B cell (primary cell): ENCODE measurements at regions of chr15 and their contacts with region 1.

Region 1: GRCh38 chr15:69997697-69998273 is 99.9 kb downstream of the TLE3 start:
- DNase-seq: peak; percentile 52
- ATAC-seq: peak; percentile 62
- H3K4me3 ChIP-seq: no peak overlapping the region
- H3K4me3 Mint-ChIP-seq: peak overlapping the region; percentile 53
- H3K27ac ChIP-seq: no peak overlapping the region
- H3K27ac Mint-ChIP-seq: peak overlapping the region; percentile 88
- H3K4me1 ChIP-seq: peaks cover 55 to 71% of the 10 kb centered on the region in 2 donors
- H3K4me1 Mint-ChIP-seq: peaks cover 88% of the 10 kb centered on the region
- H3K27me3 ChIP-seq: no peaks in the 10 kb centered on the region
- H3K27me3 Mint-ChIP-seq: no peaks in the 10 kb centered on the region
- CTCF ChIP-seq: no peak

Region 2: GRCh38 chr15:69919816-69920215 is 78.0 kb before region 1 on chr15:
- CTCF ChIA-PET with region 1: no interaction called
- POLR2A ChIA-PET with region 1: no interaction called
- intact Hi-C with region 1: no loop called
- DNase-seq: no peak
- ATAC-seq: no peak
- H3K4me3 ChIP-seq: no peak overlapping the region
- H3K4me3 Mint-ChIP-seq: no peak overlapping the region
- H3K27ac ChIP-seq: no peak overlapping the region
- H3K27ac Mint-ChIP-seq: peak overlapping the region; percentile 16
- H3K4me1 ChIP-seq: peaks cover 20 to 46% of the 10 kb centered on the region in 2 donors
- H3K4me1 Mint-ChIP-seq: peaks cover 40% of the 10 kb centered on the region
- H3K27me3 ChIP-seq: peaks cover 0 to 4% (median 0%) of the 10 kb centered on the region in 4 experiments
- H3K27me3 Mint-ChIP-seq: no peaks in the 10 kb centered on the region
- CTCF ChIP-seq: no peak

Region 3: DNA sequence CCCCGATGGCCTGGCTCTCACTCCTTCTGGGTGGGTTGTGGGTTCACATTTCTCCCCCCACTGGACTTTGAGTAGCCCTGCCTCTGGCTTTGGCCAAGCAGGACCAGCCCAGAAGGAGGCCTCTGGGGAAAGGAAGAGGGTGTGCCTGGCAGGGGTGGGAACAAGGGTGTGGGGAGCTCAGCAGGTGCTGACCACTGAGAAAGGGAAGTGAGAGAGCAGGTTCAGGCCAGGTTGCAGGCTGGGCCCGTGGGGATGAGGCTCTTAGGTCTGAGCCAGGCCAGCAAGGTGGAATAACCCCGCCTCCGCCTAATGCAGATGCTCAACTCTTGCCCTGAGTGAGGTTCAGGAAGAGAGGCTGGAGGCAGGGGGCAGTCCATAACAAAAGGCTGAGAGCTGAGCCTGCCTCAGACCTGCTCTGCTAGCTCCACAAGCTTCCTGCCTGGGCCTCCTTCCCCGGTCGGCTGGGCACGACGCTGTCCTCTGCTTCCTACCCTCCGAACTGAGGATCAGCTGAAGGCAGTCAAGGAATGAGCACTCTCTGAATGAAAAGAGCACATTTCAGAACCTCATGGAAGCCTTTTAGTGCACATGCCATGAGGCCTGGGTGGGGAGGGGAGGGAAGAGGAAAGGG is 17.2 kb after region 1 on chr15:
- CTCF ChIA-PET with region 1: interaction called, 4 read pairs
- POLR2A ChIA-PET with region 1: interaction called, 5 read pairs
- intact Hi-C with region 1: loop called (anchors 2 kb)
- DNase-seq: peak; percentile 72
- ATAC-seq: peak; percentile 76
- H3K4me3 ChIP-seq: peak overlapping the region in 1 of 5 experiments; percentile 37
- H3K4me3 Mint-ChIP-seq: peak overlapping the region; percentile 76
- H3K27ac ChIP-seq: peak overlapping the region; percentile 81 to 84
- H3K27ac Mint-ChIP-seq: peak overlapping the region; percentile 97
- H3K4me1 ChIP-seq: peaks cover 69 to 77% of the 10 kb centered on the region in 2 donors
- H3K4me1 Mint-ChIP-seq: peaks cover 79% of the 10 kb centered on the region
- H3K27me3 ChIP-seq: no peaks in the 10 kb centered on the region
- H3K27me3 Mint-ChIP-seq: no peaks in the 10 kb centered on the region
- CTCF ChIP-seq: no peak